CD8-positive, alpha-beta T cell (primary cell): ENCODE measurements at regions of chr12 and their contacts with region 1.

Region 1: DNA sequence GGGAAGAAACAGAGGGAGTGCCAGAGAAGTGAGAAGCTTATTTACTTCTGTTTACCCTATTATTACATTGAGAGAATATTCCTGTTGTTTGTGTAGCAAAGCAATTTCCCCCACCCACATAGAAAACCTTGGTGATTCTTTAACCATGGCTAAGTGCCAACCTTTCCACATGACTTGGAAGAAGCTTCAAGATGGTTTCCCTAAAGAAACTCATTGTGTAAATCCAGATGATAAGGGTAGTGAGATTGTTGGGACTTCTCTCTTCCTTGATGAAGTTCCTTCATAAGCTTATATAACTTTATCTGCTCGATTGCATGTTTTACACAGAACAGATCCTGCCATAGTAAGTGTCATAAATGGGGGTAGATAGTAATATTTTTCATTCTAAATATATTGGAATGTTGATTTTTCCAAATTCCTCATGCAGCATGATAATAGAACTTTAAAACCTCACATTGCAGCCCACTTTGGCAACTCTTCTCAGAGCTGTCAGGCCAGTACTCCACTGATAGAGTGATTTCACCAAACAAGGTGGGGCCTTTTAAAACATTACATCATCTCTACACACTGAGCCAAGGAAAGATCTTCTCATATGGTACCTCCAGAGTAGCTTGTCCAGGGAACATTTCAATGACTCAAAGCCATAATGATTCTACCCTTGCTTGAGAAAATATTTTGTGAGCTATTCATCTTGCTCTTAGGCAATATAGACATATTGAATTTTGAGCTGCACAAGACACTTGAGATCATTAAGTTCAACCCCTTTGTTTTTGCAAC is 47.8 kb upstream of the KIF21A start:
- DNase-seq: no peak
- ATAC-seq: no peak
- H3K4me3 ChIP-seq: no peak overlapping the region
- H3K4me3 Mint-ChIP-seq: no peak overlapping the region
- H3K27ac ChIP-seq: no peak overlapping the region
- H3K27ac Mint-ChIP-seq: no peak overlapping the region
- H3K4me1 ChIP-seq: no peaks in the 10 kb centered on the region
- H3K4me1 Mint-ChIP-seq: no peaks in the 10 kb centered on the region
- H3K27me3 ChIP-seq: no peaks in the 10 kb centered on the region
- H3K27me3 Mint-ChIP-seq: no peaks in the 10 kb centered on the region
- CTCF ChIP-seq: no peak

Region 2: DNA sequence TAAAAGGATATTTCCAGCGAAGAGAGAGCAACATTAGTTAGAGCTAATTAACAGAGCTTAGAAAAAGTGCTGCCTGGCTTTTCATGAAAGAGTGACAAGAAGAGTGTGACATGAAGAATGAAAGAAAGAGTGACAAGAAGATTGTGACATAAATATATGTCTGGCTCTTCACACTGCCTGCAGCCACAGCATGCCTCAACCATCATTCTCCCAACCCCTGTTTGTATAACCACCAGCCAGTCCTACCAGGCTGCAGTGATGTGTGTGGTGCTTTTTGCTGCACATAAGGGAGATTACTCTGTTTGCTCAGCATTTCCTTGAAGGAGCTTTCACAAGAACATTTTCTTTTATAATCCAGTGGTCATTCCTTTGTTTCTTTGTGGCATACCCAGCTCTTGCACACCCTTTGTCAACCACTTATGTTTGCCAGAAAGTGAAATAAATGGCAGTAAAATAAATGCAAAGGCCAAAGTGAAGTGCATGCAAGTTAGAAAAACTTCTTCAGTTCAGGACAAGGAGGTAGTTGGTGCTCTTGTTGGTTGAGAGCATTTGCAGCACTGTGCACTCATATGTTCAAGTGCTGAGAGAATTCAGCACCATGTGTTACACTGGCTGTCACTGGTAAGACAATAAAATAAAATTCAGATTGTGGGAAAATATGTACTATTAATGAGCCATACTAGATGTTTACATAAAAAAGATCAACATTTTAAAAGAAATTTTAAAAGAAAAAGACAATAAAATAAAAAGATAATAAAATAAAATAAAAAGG is 98.3 kb before region 1 on chr12:
- CTCF ChIA-PET with region 1: no interaction called
- POLR2A ChIA-PET with region 1: no interaction called
- intact Hi-C with region 1: no loop called
- DNase-seq: no peak
- ATAC-seq: no peak
- H3K4me3 ChIP-seq: no peak overlapping the region
- H3K4me3 Mint-ChIP-seq: no peak overlapping the region
- H3K27ac ChIP-seq: no peak overlapping the region
- H3K27ac Mint-ChIP-seq: no peak overlapping the region
- H3K4me1 ChIP-seq: no peaks in the 10 kb centered on the region
- H3K4me1 Mint-ChIP-seq: no peaks in the 10 kb centered on the region
- H3K27me3 ChIP-seq: no peaks in the 10 kb centered on the region
- H3K27me3 Mint-ChIP-seq: no peaks in the 10 kb centered on the region
- CTCF ChIP-seq: no peak

Region 3: GRCh38 chr12:39541471-39541870 is 50.8 kb after region 1 on chr12:
- CTCF ChIA-PET with region 1: no interaction called
- POLR2A ChIA-PET with region 1: no interaction called
- intact Hi-C with region 1: loop called in 1 of 2 experiments (anchors 5 kb)
- DNase-seq: no peak
- ATAC-seq: no peak
- H3K4me3 ChIP-seq: no peak overlapping the region
- H3K4me3 Mint-ChIP-seq: no peak overlapping the region
- H3K27ac ChIP-seq: no peak overlapping the region
- H3K27ac Mint-ChIP-seq: no peak overlapping the region
- H3K4me1 ChIP-seq: no peaks in the 10 kb centered on the region
- H3K4me1 Mint-ChIP-seq: no peaks in the 10 kb centered on the region
- H3K27me3 ChIP-seq: no peaks in the 10 kb centered on the region
- H3K27me3 Mint-ChIP-seq: no peaks in the 10 kb centered on the region
- CTCF ChIP-seq: no peak